CD4-positive, alpha-beta memory T cell (primary cell): ENCODE measurements at regions of chr19 and their contacts with region 1.

Region 1: DNA sequence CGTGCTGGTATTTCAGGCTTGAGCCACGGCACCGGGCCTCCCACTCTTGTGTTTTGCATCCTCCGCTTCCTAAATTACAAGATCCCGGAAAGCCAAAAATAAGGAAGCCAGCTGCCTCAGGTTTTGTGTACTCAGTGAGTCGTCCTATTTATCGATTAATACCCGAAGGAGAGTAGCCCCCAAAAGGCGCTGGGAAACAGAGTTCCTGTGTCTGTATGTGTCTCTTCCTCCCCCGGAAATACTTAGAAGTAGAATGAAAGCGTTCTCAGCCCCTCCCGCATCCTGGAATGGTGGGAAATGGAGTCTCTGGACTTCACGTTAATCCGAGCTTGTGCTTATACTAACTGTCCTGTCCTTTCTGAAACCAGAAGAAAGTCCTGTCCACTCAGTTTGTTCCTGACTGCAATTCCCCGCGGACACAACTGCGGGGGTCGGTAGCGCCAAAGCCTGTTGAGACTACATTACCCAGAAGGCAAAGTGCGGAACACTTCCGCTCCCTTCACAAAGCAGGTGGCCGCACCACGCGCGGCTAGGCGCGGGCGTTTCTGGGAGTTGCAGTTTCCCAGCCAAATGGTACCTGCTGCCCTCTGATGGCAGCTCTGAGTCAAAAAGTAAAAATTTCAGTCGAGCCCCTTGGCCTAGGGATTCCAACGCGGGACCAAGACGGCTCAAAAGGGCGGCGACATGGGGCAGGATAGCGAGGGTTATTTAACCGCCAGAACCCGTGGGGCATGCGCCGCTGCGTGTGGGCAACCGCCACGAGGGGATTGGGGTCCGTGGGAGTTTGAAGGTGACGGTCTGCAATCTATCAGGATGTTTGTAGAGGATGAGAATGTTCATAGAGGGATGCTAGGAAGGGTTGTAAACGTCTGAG is 2.2 kb upstream of the GSK3A start:
- DNase-seq: peak; percentile 89 to 95 (median 91)
- H3K4me3 ChIP-seq: peak overlapping the region; percentile 53 to 89
- H3K4me3 Mint-ChIP-seq: peak overlapping the region; percentile 94 to 99 (median 97)
- H3K27ac ChIP-seq: peak overlapping the region; percentile 89
- H3K27ac Mint-ChIP-seq: peak overlapping the region; percentile 77 to 99 (median 99)
- H3K4me1 ChIP-seq: peaks cover 47% of the 10 kb centered on the region
- H3K4me1 Mint-ChIP-seq: peaks cover 26 to 62% (median 44%) of the 10 kb centered on the region in 4 donors
- H3K27me3 ChIP-seq: no peaks in the 10 kb centered on the region
- H3K27me3 Mint-ChIP-seq: no peaks in the 10 kb centered on the region

Region 2: DNA sequence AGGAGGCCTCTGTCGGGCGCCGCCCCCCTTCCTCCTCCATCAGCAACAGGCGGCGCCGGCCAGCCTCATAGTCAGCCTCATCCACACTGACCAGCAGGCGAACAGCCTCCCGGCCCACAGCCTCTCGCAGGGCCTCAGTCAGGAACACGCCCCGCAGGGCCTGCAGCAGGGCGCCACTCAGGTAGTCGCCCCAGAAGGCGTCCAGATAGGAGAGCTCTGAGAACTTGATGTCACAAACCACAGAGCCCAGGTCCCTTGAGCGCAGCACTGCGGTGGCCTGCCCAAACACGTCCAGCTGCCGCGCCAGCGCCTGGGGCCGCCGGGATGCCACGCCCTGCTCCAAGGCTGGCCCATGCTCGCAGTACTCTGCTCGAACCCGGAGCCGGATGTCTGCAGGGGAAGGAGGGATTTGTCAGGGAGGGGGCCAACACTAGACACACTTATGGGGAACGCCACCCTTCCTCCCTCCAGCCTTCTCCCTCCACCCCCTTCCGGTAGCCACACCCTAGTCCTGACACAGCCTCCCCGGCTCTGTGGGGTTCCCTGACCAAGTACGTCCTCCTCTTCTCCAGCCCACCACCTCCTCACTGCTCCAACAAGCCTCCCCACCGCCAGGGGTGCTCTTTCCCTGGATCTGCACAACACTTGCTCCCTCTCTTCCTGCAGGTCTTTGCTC is 45.0 kb before region 1 on chr19:
- CTCF ChIA-PET with region 1: interaction called, 7 read pairs
- POLR2A ChIA-PET with region 1: interaction called, 35 read pairs
- intact Hi-C with region 1: loop called (anchors 1 kb)
- DNase-seq: peak; percentile 53 to 75 (median 65)
- H3K4me3 ChIP-seq: peak overlapping the region; percentile 43 to 49
- H3K4me3 Mint-ChIP-seq: peak overlapping the region; percentile 80 to 93 (median 88)
- H3K27ac ChIP-seq: peak overlapping the region; percentile 86
- H3K27ac Mint-ChIP-seq: peak overlapping the region; percentile 86 to 96 (median 96)
- H3K4me1 ChIP-seq: peaks cover 94% of the 10 kb centered on the region
- H3K4me1 Mint-ChIP-seq: peaks cover 63 to 93% (median 78%) of the 10 kb centered on the region in 4 donors
- H3K27me3 ChIP-seq: no peaks in the 10 kb centered on the region
- H3K27me3 Mint-ChIP-seq: no peaks in the 10 kb centered on the region

Region 3: DNA sequence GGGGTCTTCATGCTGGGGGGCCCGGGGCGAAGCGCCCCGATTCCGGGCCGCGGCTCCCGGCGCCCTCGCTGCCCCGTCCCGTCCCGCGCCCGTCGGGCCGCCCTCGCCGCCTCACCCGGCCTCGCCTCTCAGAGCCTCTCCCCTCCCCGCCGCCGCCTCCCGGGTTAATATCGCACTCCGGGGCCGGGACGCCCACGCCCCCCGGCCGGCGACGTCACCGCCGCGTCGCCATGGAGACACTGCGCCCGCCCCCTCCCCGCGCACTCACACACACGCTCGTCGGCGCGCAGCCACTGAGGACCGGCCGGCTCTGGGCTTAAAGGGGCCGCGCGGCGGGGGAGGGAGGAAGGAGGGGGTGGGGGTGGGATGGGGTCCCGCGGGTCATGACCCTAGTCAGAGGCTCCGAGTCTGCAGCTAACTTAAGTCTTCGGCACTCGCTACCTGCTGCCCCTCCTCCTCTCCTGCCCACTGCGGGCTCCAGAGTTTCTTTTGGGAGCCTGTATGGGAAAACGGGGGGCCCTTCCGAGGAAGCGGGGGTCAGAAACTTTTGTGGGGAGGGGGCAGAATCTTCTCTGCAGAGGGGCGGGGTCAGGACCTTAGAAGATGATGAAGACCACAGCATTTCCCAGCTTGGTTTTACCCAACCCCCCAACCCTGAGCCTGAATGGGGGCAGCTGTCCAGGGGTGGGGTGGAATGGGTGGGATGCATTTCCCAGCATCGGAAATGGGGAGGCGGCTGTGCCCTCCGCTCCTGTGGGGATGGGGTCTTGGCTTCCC is 10.6 kb after region 1 on chr19 and contains the start of gene ERF:
- CTCF ChIA-PET with region 1: interaction called, 4 read pairs
- POLR2A ChIA-PET with region 1: interaction called, 22 read pairs
- intact Hi-C with region 1: loop called (anchors 1 kb)
- DNase-seq: peak; percentile 92 to 95 (median 94)
- H3K4me3 ChIP-seq: peak within 1 kb of the TSS; percentile 69 to 90
- H3K4me3 Mint-ChIP-seq: peak within 1 kb of the TSS; percentile 76 to 88 (median 82)
- H3K27ac ChIP-seq: peak within 1 kb of the TSS; percentile 93
- H3K27ac Mint-ChIP-seq: peak within 1 kb of the TSS; percentile 81 to 88 (median 86)
- H3K4me1 ChIP-seq: peaks cover 35% of the 10 kb centered on the region
- H3K4me1 Mint-ChIP-seq: peaks cover 12 to 40% (median 27%) of the 10 kb centered on the region in 4 donors
- H3K27me3 ChIP-seq: no peaks in the 10 kb centered on the region
- H3K27me3 Mint-ChIP-seq: peaks cover 3 to 4% of the 10 kb centered on the region in 2 donors
- total RNA-seq, gene ERF: 38.5 to 39.9 TPM

Region 4: GRCh38 chr19:42283143-42284065 is 38.8 kb after region 1 on chr19:
- CTCF ChIA-PET with region 1: interaction called, 77 read pairs
- POLR2A ChIA-PET with region 1: interaction called, 139 read pairs
- intact Hi-C with region 1: loop called (anchors 1 kb)
- DNase-seq: peak; percentile 96 to 98 (median 97)
- H3K4me3 ChIP-seq: peak overlapping the region; percentile 1 to 60
- H3K4me3 Mint-ChIP-seq: no peak overlapping the region
- H3K27ac ChIP-seq: peak overlapping the region; percentile 77
- H3K27ac Mint-ChIP-seq: no peak overlapping the region
- H3K4me1 ChIP-seq: peaks cover 54% of the 10 kb centered on the region
- H3K4me1 Mint-ChIP-seq: peaks cover 32 to 37% (median 33%) of the 10 kb centered on the region in 4 donors
- H3K27me3 ChIP-seq: no peaks in the 10 kb centered on the region
- H3K27me3 Mint-ChIP-seq: no peaks in the 10 kb centered on the region

Region 5: DNA sequence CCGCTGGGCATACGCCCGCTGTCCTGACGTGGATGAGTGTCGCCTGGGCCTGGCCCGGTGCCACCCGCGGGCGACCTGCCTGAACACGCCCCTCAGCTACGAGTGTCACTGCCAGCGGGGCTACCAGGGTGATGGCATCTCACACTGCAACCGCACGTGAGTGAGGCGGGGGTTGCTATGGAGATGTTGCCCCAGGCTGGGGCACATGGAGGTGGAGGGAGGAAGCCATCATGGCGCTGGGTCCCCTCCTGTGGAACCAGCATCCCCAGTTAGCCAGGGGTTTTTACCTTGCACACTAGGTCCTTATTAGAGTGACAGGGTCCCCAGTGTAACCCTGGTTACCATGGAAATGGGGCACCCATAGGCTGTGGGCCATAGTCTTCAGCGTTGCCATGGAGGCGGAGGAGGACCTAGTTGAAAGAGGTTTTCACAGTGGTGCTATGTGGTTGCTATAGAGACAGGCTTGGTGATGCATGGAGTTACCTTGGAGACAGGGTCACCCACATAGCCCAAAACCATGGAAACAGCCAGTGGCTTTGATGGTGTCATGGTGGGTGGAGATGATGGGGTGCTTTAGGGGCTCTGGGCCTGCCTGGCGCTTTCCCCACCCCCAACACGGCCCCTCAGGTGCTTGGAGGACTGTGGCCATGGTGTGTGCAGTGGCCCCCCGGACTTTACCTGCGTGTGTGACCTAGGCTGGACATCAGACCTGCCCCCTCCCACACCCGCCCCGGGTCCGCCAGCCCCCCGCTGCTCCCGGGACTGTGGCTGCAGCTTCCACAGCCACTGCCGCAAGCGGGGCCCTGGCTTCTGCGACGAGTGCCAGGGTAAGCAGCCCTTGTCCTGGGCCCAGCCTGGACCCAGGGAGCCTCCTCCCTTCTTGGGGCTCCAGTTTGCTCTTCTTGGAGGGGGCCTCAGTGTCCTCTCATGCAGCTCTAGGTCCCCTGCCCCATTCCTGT is 108.0 kb after region 1 on chr19:
- CTCF ChIA-PET with region 1: no interaction called
- POLR2A ChIA-PET with region 1: no interaction called
- intact Hi-C with region 1: no loop called
- DNase-seq: peak in 1 of 5 donors; percentile 6
- H3K4me3 ChIP-seq: no peak overlapping the region
- H3K4me3 Mint-ChIP-seq: no peak overlapping the region
- H3K27ac ChIP-seq: no peak overlapping the region
- H3K27ac Mint-ChIP-seq: peak overlapping the region in 1 of 7 donors; percentile 25
- H3K4me1 ChIP-seq: no peaks in the 10 kb centered on the region
- H3K4me1 Mint-ChIP-seq: peaks cover 0 to 4% (median 0%) of the 10 kb centered on the region in 4 donors
- H3K27me3 ChIP-seq: no peaks in the 10 kb centered on the region
- H3K27me3 Mint-ChIP-seq: no peaks in the 10 kb centered on the region

Region 6: GRCh38 chr19:42401365-42402303 is 157.1 kb after region 1 on chr19:
- CTCF ChIA-PET with region 1: no interaction called
- POLR2A ChIA-PET with region 1: no interaction called
- intact Hi-C with region 1: loop called (anchors 2 kb)
- DNase-seq: peak; percentile 63 to 79 (median 68)
- H3K4me3 ChIP-seq: peak overlapping the region; percentile 23 to 52
- H3K4me3 Mint-ChIP-seq: peak overlapping the region; percentile 82 to 91 (median 84)
- H3K27ac ChIP-seq: peak overlapping the region; percentile 29
- H3K27ac Mint-ChIP-seq: peak overlapping the region; percentile 64 to 88 (median 78)
- H3K4me1 ChIP-seq: peaks cover 30% of the 10 kb centered on the region
- H3K4me1 Mint-ChIP-seq: peaks cover 26 to 53% (median 39%) of the 10 kb centered on the region in 4 donors
- H3K27me3 ChIP-seq: no peaks in the 10 kb centered on the region
- H3K27me3 Mint-ChIP-seq: no peaks in the 10 kb centered on the region